ENCODE measurements at regions of chr18 and their contacts with region 1.

Region 1: DNA sequence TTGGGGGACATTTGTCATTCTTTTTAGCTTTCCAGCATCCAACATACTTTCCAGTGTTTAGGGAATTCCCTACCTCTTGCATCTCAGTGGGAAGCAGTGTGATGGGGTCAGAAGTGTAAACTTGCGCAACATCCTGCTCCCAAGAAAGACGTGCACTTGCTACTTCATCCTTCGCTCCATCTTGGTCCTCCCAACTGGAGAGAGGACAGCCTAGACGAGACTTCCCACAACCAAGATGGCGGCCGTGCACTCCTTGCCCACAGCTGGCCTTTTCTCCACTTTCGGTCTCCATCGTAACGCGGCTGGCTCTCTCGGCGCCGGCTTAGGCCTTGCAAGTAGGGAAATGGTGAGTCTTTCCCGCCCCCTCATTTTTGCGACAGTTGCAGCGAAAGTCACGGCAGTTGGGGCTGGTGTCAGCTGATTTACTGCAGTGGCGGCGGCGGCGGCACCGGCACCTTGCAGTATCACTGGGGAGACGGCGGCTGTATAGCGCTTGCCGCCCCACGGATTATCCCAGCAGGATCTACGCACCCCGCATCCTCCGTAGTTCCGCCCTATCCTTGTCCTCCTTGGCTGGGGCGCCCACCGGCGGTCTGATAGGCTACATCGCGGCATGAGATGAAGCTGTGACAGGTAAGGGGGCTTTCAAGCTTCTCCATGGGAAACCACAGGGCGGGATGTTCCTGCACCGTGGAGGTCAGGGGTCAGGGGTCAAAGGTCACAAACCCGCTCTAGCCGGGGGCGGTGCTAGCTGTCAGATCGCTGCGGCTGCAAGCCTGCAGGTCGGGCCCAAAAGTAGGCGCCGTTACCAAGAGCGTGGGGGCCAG is at the start of gene WDR7:
- DNase-seq: peak; percentile 94
- H3K4me3 Mint-ChIP-seq: peak within 1 kb of the TSS; percentile 89
- H3K27ac Mint-ChIP-seq: peak within 1 kb of the TSS; percentile 94
- H3K4me1 Mint-ChIP-seq: peaks cover 72% of the 10 kb centered on the region
- H3K27me3 Mint-ChIP-seq: no peaks in the 10 kb centered on the region
- total RNA-seq, gene WDR7: 28.4 and 32.2 TPM in 2 replicates

Region 2: DNA sequence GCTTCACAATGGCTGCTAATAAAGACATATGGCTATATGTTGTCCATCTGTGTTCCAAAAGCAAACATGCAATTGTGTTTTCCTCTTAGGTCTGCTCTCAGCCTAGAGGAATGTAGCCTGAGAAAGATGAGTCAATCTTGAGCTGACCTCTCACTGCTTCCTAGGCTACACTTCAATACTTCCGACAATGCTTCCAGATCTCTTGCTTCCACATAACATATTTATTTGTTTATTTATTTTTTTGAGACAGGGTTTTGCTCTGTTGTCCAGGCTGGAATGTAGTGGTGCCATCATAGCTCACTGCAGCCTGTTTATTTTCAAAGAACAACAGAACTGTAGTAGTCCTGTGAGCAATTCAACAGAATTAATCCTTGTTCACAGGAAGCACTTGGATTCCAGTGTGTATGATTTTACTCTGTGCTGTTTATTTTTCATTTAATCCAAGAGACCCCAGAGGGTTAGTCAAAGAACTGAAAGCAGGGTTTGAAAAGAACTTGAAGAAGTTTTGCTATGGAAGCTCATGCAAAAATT is 450.7 kb before region 1 on chr18:
- intact Hi-C with region 1: no loop called
- DNase-seq: no peak
- H3K4me3 Mint-ChIP-seq: no peak overlapping the region
- H3K27ac Mint-ChIP-seq: no peak overlapping the region
- H3K4me1 Mint-ChIP-seq: no peaks in the 10 kb centered on the region
- H3K27me3 Mint-ChIP-seq: no peaks in the 10 kb centered on the region

Region 3: DNA sequence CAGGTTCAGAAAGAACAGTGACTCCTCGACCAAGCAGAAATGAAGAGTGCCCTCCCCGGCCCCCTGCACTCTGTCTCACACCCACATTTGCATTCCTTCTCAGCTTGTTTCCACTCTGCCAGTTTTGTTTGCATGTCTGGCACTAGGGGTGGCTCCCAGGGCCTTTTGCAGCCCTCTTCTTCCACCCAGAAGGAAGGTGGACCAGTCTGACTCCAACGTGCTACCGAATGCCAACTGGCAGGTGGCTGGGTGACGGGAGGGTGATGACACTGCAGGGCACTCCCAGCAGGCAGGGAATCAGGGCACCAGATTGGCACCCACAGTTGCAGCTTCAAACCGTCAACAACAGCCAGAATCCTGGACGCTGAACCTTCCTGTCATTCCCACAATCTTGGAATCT is 383.8 kb before region 1 on chr18:
- intact Hi-C with region 1: no loop called
- DNase-seq: no peak
- H3K4me3 Mint-ChIP-seq: no peak overlapping the region
- H3K27ac Mint-ChIP-seq: no peak overlapping the region
- H3K4me1 Mint-ChIP-seq: no peaks in the 10 kb centered on the region
- H3K27me3 Mint-ChIP-seq: no peaks in the 10 kb centered on the region

Region 4: GRCh38 chr18:56638271-56639093 is 12.7 kb before region 1 on chr18 and contains the start of gene TXNL1:
- intact Hi-C with region 1: loop called (anchors 1 kb)
- DNase-seq: peak; percentile 98
- H3K4me3 Mint-ChIP-seq: peak within 1 kb of the TSS; percentile 99
- H3K27ac Mint-ChIP-seq: peak within 1 kb of the TSS; percentile 97
- H3K4me1 Mint-ChIP-seq: peaks cover 55% of the 10 kb centered on the region
- H3K27me3 Mint-ChIP-seq: no peaks in the 10 kb centered on the region
- total RNA-seq, gene TXNL1: 94.2 and 100 TPM in 2 replicates

Region 5: GRCh38 chr18:56672391-56672790 is 21.2 kb after region 1 on chr18:
- intact Hi-C with region 1: loop called (anchors 2 kb)
- DNase-seq: no peak
- H3K4me3 Mint-ChIP-seq: no peak overlapping the region
- H3K27ac Mint-ChIP-seq: no peak overlapping the region
- H3K4me1 Mint-ChIP-seq: peaks cover 19% of the 10 kb centered on the region
- H3K27me3 Mint-ChIP-seq: no peaks in the 10 kb centered on the region

Region 6: DNA sequence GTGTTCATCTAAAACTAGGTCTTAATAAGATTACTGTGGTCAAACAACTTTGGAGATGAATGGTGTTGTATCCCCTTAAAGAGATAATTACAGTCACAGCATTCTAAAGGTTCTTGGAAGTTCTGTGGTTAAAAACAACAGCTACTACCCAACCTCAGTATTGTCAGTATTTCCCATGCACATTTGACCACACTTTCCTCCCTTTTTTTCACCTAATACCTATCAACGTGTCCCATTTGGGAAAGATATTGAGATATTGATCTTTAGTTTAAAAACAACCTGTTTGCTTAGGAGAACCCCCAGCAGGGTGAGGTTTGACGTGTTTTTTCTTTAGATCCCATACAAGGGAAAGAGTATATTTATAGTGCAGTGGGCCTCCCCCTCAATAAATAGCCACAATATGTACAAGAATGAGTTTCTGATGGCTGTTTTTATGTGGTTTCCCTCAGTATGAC is 65.6 kb after region 1 on chr18:
- intact Hi-C with region 1: loop called (anchors 2 kb)
- DNase-seq: no peak
- H3K4me3 Mint-ChIP-seq: no peak overlapping the region
- H3K27ac Mint-ChIP-seq: peak overlapping the region; percentile 66
- H3K4me1 Mint-ChIP-seq: peaks cover 35% of the 10 kb centered on the region
- H3K27me3 Mint-ChIP-seq: no peaks in the 10 kb centered on the region

Region 7: DNA sequence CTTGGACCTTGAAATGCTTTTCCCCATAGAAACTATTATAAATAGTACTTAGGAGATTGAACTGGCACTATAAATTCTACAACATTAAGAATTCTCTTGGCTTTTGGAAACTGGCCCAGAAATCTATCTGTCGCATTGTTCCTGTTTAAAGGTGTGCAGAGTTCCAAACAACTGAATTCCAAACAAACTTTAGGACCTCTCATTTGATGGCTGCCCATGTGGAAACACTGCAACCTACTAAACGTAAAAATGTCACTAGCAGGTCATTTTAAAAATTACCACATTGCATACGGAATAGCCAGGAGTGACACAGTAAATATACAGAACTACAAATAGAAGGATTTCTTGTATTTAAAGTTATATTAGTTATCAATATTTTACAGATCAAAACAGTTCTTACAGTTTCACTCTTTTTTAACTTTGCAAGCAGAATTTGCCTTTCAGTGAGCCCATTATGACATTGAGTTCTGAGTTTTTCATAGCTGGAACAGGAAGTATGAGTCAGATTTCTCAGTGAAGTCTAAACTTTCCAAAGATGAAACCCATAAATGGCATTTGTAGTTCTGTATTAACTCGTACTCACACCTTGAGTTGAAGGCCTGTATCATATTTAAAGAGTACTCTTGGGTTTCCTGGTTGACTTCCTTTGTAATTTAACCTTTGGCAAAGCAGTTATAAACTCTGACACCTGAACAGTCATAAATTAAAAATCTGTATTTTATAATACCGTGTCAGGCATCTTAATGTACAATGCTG is 353.4 kb after region 1 on chr18:
- intact Hi-C with region 1: loop called (anchors 2 kb)
- DNase-seq: no peak
- H3K4me3 Mint-ChIP-seq: no peak overlapping the region
- H3K27ac Mint-ChIP-seq: peak overlapping the region; percentile 57
- H3K4me1 Mint-ChIP-seq: peaks cover 46% of the 10 kb centered on the region
- H3K27me3 Mint-ChIP-seq: no peaks in the 10 kb centered on the region

Region 8: GRCh38 chr18:57586251-57587049 is 935.3 kb after region 1 on chr18 and contains the start of gene FECH:
- intact Hi-C with region 1: loop called (anchors 1 kb)
- DNase-seq: peak; percentile 77
- H3K4me3 Mint-ChIP-seq: peak within 1 kb of the TSS; percentile 86
- H3K27ac Mint-ChIP-seq: peak within 1 kb of the TSS; percentile 85
- H3K4me1 Mint-ChIP-seq: peaks cover 17% of the 10 kb centered on the region
- H3K27me3 Mint-ChIP-seq: no peaks in the 10 kb centered on the region
- total RNA-seq, gene FECH: 21.7 and 23.5 TPM in 2 replicates

Region 9: GRCh38 chr18:57630002-57630753 is 979.0 kb after region 1 on chr18:
- intact Hi-C with region 1: loop called (anchors 5 kb)
- DNase-seq: peak; percentile 89
- H3K4me3 Mint-ChIP-seq: peak overlapping the region; percentile 96
- H3K27ac Mint-ChIP-seq: peak overlapping the region; percentile 94
- H3K4me1 Mint-ChIP-seq: peaks cover 9% of the 10 kb centered on the region
- H3K27me3 Mint-ChIP-seq: no peaks in the 10 kb centered on the region

Measured in activated T-helper 1 cell treated with anti-CD3 and anti-CD28 coated beads, Interleukin-12 subunit alpha, Interleukin-12 subunit beta, Interleukin-2, Interleukin-4 antibody, amounts not matched to agents 30 ng/mL and 10 ng/mL and 1 ng/mL, durations not matched to agents 14 hours and 24 hours and 36 hours (primary cell).